HCT116 (cell line): ENCODE measurements at regions of chr6 and their contacts with region 1.

Region 1: DNA sequence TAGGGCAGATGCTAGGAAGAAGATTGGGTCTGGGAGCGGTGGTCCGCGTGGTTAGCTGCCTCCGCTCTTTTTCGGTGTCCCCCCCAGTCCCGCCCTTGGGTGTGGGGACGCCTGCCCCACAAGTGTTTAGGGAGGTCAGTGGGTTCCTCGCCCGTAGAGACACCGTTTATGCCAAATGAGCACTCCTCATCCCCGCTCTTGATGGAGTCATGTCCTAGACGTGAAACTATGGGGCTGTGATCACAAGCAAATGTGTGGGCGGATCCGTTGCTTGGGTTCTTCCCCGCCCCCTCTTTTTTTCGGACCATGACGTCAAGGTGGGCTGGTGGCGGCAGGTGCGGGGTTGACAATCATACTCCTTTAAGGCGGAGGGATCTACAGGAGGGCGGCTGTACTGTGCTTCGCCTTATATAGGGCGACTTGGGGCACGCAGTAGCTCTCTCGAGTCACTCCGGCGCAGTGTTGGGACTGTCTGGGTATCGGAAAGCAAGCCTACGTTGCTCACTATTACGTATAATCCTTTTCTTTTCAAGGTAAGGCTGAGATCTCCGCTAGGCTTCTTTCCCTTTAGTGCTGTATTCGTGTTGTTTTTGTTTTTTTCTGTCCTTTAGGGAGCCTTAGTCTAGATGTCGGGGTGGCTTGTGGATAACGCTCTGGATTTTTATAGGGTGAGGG is at the start of gene HSP90AB1:
- DNase-seq: peak; percentile 98
- ATAC-seq: peak; percentile 65
- H3K4me3 ChIP-seq: peak within 1 kb of the TSS; percentile 82 to 100
- H3K27ac ChIP-seq: peak within 1 kb of the TSS; percentile 82
- H3K4me1 ChIP-seq: peaks cover 10 to 33% of the 10 kb centered on the region in 2 experiments
- H3K27me3 ChIP-seq: no peaks in the 10 kb centered on the region
- CTCF ChIP-seq: no peak
- POLR2A ChIP-seq: peak; percentile 100
- RAD21 ChIP-seq: no peak
- total RNA-seq, gene HSP90AB1: 2,554 TPM

Region 2: GRCh38 chr6:43547222-43547621 is 699.6 kb before region 1 on chr6:
- CTCF ChIA-PET with region 1: no interaction called
- POLR2A ChIA-PET with region 1: no interaction called
- RAD21 ChIA-PET with region 1: no interaction called
- intact Hi-C with region 1: no loop called
- DNase-seq: no peak
- ATAC-seq: no peak
- H3K4me3 ChIP-seq: no peak overlapping the region
- H3K27ac ChIP-seq: no peak overlapping the region
- H3K4me1 ChIP-seq: no peaks in the 10 kb centered on the region
- H3K27me3 ChIP-seq: no peaks in the 10 kb centered on the region
- CTCF ChIP-seq: no peak
- POLR2A ChIP-seq: no peak
- RAD21 ChIP-seq: no peak

Region 3: GRCh38 chr6:43629505-43630300 is 617.1 kb before region 1 on chr6:
- CTCF ChIA-PET with region 1: no interaction called
- POLR2A ChIA-PET with region 1: no interaction called
- RAD21 ChIA-PET with region 1: no interaction called
- intact Hi-C with region 1: loop called (anchors 2 kb)
- DNase-seq: peak; percentile 95
- ATAC-seq: peak; percentile 80
- H3K4me3 ChIP-seq: peak overlapping the region; percentile 80 to 100
- H3K27ac ChIP-seq: peak overlapping the region; percentile 86
- H3K4me1 ChIP-seq: peaks cover 20 to 39% of the 10 kb centered on the region in 2 experiments
- H3K27me3 ChIP-seq: no peaks in the 10 kb centered on the region
- CTCF ChIP-seq: no peak
- POLR2A ChIP-seq: peak; percentile 80
- RAD21 ChIP-seq: no peak

Region 4: DNA sequence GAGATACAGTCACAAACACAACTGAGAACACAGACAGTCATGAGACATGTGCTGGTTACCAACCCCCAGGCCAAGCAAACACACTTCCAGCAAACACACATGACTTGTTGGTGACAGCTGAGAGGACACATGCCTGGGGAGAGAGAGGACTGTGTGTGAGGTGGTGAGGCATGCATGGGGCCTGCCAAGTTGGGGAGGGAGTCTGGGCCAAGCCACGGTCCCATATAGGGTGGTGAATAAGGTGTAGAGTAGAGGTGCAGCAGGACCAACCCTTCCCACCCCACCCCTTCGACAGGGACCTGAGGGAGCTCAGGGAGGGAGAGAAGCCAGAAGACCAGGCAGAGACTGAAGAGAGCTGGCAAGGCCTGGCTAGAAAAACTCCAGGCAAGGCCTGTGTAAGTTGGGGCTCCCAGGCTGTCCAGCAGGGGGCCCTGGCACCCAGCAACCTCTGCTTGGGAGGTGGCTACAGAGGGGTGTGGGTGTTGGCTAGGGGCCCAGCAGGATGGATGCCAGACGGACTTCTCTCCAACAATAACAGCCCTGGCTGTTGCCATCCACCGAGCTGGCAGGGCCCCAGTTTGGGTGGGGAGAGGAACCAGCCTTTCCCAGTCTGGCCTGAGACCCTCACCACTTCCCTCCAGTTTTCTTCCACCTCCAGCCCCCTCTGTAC is 25.4 kb before region 1 on chr6:
- CTCF ChIA-PET with region 1: interaction called, 3 read pairs
- POLR2A ChIA-PET with region 1: interaction called, 27 read pairs
- RAD21 ChIA-PET with region 1: interaction called in 1 of 2 experiments, 3 read pairs
- intact Hi-C with region 1: no loop called
- DNase-seq: no peak
- ATAC-seq: peak; percentile 56
- H3K4me3 ChIP-seq: no peak overlapping the region; a peak in 1 of 4 replicates
- H3K27ac ChIP-seq: peak overlapping the region; percentile 41
- H3K4me1 ChIP-seq: peaks cover 45 to 71% of the 10 kb centered on the region in 2 experiments
- H3K27me3 ChIP-seq: no peaks in the 10 kb centered on the region
- CTCF ChIP-seq: peak in 2 of 3 experiments; percentile 68 to 83; a peak in 4 of 6 replicates
- POLR2A ChIP-seq: no peak
- RAD21 ChIP-seq: no peak

Region 5: GRCh38 chr6:44257025-44257752 is 10.4 kb after region 1 on chr6 and contains the start of gene SLC35B2:
- CTCF ChIA-PET with region 1: interaction called, 16 read pairs
- POLR2A ChIA-PET with region 1: interaction called, 74 read pairs
- RAD21 ChIA-PET with region 1: no interaction called
- intact Hi-C with region 1: no loop called
- DNase-seq: no peak
- ATAC-seq: peak; percentile 67
- H3K4me3 ChIP-seq: peak within 1 kb of the TSS; percentile 59 to 92
- H3K27ac ChIP-seq: peak within 1 kb of the TSS; percentile 95
- H3K4me1 ChIP-seq: peaks cover 2 to 21% of the 10 kb centered on the region in 2 experiments; a peak in 3 of 4 replicates
- H3K27me3 ChIP-seq: no peaks in the 10 kb centered on the region
- CTCF ChIP-seq: peak; percentile 19 to 60 (median 44); a peak in 4 of 6 replicates
- POLR2A ChIP-seq: peak; percentile 47
- RAD21 ChIP-seq: no peak
- total RNA-seq, gene SLC35B2: 50.5 TPM

Region 6: DNA sequence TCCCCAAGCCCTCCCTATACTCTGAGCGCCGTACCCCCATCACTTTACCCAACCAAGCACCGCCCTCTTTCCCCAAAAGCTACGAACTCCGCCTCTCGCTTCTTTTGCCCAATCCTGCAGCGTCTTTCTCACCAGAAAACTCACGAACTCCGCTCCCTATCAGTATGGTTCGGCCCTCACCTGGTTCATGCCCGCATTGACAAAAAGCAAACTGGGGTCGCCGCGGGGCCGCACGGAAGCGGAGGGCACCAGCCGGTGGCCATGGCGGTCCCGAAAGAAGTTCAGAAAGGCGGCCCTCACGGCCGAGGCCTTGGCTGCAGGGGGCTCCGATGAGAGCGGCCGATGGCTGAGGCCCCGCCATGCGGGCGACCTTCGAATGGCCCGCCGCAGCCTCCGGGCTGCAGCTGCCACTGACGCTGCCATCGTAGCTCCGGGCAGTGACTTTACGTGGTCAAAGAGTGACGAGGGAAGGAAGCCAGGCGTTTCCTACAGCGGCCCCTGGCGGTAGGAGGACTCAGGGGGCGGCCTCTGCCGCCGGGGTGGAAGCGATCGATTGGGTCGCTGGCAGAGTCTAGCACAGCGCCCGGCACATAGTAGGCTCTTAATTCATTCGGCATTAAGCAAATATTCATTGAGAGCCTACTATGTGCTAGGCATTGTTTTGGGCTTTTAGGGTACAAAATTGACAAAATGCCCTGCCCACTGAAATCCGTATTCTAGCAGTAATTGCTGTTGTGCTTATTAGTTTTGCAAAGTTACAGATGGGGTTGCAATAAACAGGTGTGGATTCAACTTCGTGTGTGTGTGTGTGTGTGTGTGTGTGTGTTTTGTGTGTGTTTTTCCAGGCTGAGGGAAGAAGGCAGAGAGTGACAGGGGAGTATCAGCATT is 66.3 kb after region 1 on chr6 and contains the start of gene AARS2:
- CTCF ChIA-PET with region 1: no interaction called
- POLR2A ChIA-PET with region 1: interaction called, 11 read pairs
- RAD21 ChIA-PET with region 1: no interaction called
- intact Hi-C with region 1: no loop called
- DNase-seq: peak; percentile 81
- ATAC-seq: peak; percentile 95
- H3K4me3 ChIP-seq: peak within 1 kb of the TSS; percentile 97 to 98
- H3K27ac ChIP-seq: peak within 1 kb of the TSS; percentile 72
- H3K4me1 ChIP-seq: peaks cover 6 to 16% of the 10 kb centered on the region in 2 experiments
- H3K27me3 ChIP-seq: peaks cover 3% of the 10 kb centered on the region; the same call in 1 of the 2 replicates
- CTCF ChIP-seq: peak; percentile 73 to 98 (median 97)
- POLR2A ChIP-seq: peak; percentile 73
- RAD21 ChIP-seq: no peak
- total RNA-seq, gene AARS2: 14.9 TPM